ENCODE measurements at regions of chr1 and their contacts with region 1.

Region 1: GRCh38 chr1:156510709-156511108 is 10.1 kb upstream of the MEF2D start:
- DNase-seq: peak; percentile 98
- H3K4me3 Mint-ChIP-seq: peak overlapping the region; percentile 42
- H3K27ac Mint-ChIP-seq: peak overlapping the region; percentile 77
- H3K4me1 Mint-ChIP-seq: peaks cover 49% of the 10 kb centered on the region
- H3K27me3 Mint-ChIP-seq: no peaks in the 10 kb centered on the region
- CTCF ChIP-seq: no peak

Region 2: DNA sequence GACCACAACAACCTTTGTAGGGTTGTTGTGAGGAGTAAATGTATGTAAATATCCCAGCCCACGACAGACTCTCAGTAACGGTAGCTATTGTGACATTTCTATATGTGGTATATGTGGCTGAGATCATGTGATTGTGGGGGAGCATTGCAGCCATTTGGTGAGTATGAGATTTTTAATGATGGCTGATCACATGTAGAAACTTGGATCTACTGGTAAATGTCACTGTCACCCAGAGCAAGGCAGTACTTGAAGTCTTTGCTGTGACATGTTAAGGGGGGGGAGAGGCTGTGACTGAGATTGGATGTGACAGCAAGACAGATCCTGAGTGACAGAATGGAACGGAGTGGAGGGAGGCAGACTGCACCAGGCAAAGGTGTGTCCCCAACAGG is 13.8 kb after region 1 on chr1:
- CTCF ChIA-PET with region 1: interaction called, 5 read pairs
- POLR2A ChIA-PET with region 1: interaction called, 87 read pairs
- intact Hi-C with region 1: no loop called
- DNase-seq: no peak
- H3K4me3 Mint-ChIP-seq: no peak overlapping the region
- H3K27ac Mint-ChIP-seq: no peak overlapping the region
- H3K4me1 Mint-ChIP-seq: no peaks in the 10 kb centered on the region
- H3K27me3 Mint-ChIP-seq: no peaks in the 10 kb centered on the region
- CTCF ChIP-seq: no peak

Region 3: DNA sequence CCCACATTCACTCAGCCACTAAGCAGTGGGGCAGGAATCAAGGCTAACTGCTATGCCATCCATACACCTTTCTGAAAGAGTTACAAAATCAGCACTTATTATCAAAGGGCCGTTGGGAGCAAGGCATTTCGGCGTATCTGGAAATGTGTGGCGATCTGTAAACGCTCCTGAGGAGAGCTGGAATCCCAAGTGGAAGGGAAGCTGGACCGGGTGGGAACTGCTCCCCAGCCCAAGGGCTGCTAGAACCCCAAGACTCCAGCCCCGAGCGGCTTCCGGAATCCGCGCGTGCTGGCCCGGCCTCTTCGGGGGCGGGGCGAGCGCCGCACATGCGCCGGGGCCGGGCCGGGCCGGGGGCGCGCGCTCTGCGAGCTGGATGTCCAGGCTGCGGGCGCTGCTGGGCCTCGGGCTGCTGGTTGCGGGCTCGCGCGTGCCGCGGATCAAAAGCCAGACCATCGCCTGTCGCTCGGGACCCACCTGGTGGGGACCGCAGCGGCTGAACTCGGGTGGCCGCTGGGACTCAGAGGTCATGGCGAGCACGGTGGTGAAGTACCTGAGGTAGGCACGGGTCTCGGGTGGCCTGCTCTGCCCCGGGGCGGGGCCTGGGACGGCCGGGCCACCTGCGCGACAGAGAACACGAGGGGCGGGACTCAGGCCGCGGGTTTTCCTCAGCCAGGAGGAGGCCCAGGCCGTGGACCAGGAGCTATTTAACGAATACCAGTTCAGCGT is 80.9 kb after region 1 on chr1 and contains the start of gene NAXE:
- CTCF ChIA-PET with region 1: interaction called, 6 read pairs
- POLR2A ChIA-PET with region 1: interaction called, 116 read pairs
- intact Hi-C with region 1: no loop called
- DNase-seq: peak; percentile 77
- H3K4me3 Mint-ChIP-seq: peak within 1 kb of the TSS; percentile 77
- H3K27ac Mint-ChIP-seq: peak within 1 kb of the TSS; percentile 65
- H3K4me1 Mint-ChIP-seq: peaks cover 13% of the 10 kb centered on the region
- H3K27me3 Mint-ChIP-seq: no peaks in the 10 kb centered on the region
- CTCF ChIP-seq: no peak
- total RNA-seq, gene NAXE: 141 and 155 TPM in 2 replicates

Region 4: GRCh38 chr1:156601122-156601830 is 90.6 kb after region 1 on chr1 and contains the start of gene GPATCH4:
- CTCF ChIA-PET with region 1: interaction called, 4 read pairs
- POLR2A ChIA-PET with region 1: interaction called, 12 read pairs
- intact Hi-C with region 1: loop called (anchors 10 kb)
- DNase-seq: peak; percentile 94
- H3K4me3 Mint-ChIP-seq: peak within 1 kb of the TSS; percentile 86
- H3K27ac Mint-ChIP-seq: peak within 1 kb of the TSS; percentile 94
- H3K4me1 Mint-ChIP-seq: peaks cover 18% of the 10 kb centered on the region
- H3K27me3 Mint-ChIP-seq: no peaks in the 10 kb centered on the region
- CTCF ChIP-seq: no peak
- total RNA-seq, gene GPATCH4: 67.3 and 107 TPM in 2 replicates